SK-N-SH (cell line): ENCODE measurements at regions of chr20 and their contacts with region 1.

Region 1: DNA sequence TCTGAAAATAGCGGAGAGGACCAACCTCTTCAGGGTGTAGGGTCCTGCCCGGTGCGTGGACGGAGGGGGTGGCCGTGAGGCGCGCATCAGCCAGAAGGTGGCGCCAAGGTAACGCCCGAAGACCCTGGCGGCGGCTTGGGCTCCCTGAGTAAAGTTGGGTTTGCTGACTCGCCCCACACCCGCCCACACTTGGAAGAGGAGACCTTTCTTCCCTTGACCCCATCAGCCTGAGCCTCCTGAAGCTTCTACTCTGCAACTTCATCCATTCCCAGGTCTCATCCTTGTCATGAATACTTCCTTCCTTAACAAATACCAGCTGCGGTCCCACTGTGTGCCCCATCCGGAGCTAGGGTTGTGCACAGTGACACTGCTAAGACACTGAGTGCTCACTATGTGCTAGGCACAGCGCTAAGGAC is 14.6 kb downstream of the CD40 start:
- DNase-seq: peak; percentile 88
- H3K4me3 ChIP-seq: peak overlapping the region in 1 of 2 experiments; percentile 33; a peak in 1 of 4 replicates
- H3K27ac ChIP-seq: no peak overlapping the region
- H3K4me1 ChIP-seq: peaks cover 0 to 35% of the 10 kb centered on the region in 2 experiments; a peak in 1 of 4 replicates
- H3K27me3 ChIP-seq: peaks cover 30% of the 10 kb centered on the region; the same call in 1 of the 2 replicates
- CTCF ChIP-seq: peak; percentile 90
- EP300 ChIP-seq: no peak
- RAD21 ChIP-seq: peak; percentile 94

Region 2: DNA sequence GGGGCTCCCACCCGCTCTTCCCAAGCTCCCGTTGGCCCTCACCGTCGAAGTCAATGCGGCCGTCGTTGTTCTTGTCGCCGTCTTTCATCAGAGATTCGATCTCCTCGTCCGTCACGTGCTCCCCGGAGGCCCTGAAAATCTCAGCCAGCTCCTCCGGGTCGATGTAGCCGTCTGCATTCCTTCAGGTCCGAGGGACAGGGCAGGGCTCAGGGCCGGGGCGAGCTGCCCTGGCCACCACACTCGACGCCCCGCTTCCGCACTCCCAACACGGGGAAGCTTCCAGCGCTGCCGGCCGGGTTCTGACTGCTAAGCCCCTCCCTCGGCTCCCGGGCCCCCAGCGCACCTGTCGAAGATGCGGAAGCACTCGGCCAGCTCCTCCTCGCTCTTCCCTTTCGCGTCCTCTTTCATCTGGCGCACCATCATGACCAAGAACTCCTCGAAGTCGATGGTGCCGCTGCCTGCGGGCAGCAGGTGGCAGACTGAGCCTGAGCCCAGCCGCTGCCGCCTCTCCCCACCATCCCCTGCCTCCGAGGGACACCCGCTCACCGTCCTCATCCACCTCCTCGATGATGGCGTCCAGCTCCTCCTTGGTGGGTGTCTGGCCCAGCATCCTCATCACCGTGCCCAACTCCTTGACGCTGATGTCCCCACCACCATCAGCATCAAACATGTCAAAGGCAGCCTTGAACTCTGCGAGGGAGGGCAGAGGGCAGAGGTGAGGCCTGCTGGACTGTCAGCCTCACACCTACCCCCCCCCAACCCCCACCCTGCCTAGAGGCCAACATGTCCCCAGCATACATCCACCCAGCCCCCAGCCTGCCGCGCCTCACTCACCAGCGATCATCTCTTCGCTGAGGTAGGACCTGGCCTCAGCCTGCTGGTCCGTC is 308.5 kb before region 1 on chr20:
- CTCF ChIA-PET with region 1: no interaction called
- POLR2A ChIA-PET with region 1: no interaction called
- DNase-seq: peak; percentile 62
- H3K4me3 ChIP-seq: no peak overlapping the region
- H3K27ac ChIP-seq: no peak overlapping the region
- H3K4me1 ChIP-seq: peaks cover 0 to 8% of the 10 kb centered on the region in 2 experiments; a peak in 2 of 4 replicates
- H3K27me3 ChIP-seq: no peaks in the 10 kb centered on the region
- CTCF ChIP-seq: no peak; the same call in 1 of the 2 replicates
- EP300 ChIP-seq: no peak
- RAD21 ChIP-seq: peak; percentile 52

Region 3: DNA sequence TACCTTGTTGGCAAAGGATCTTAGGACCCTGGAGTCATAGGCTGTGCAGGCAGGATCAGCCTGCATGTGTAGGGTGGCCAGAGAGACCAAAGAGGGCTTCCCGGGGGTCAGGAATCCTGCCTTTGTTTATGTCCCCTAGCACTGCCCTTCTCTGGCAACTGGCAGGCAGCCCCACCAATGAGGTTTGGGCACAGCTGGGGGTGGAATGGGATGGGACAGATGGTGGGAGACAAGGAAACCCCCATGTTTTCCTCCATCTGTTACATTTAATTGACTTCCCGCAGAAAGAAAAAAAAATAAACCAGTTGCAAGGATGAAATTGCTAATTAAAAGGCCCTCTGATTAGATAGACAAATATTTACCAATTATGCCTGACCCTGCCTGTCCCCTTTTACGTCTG is 13.0 kb after region 1 on chr20:
- CTCF ChIA-PET with region 1: interaction called, 44 read pairs
- POLR2A ChIA-PET with region 1: no interaction called
- DNase-seq: no peak
- H3K4me3 ChIP-seq: no peak overlapping the region
- H3K27ac ChIP-seq: no peak overlapping the region
- H3K4me1 ChIP-seq: peaks cover 0 to 65% of the 10 kb centered on the region in 2 experiments; a peak in 2 of 4 replicates
- H3K27me3 ChIP-seq: peaks cover 17% of the 10 kb centered on the region; the same call in 1 of the 2 replicates
- CTCF ChIP-seq: no peak
- EP300 ChIP-seq: no peak
- RAD21 ChIP-seq: no peak

Region 4: GRCh38 chr20:46199198-46199597 is 66.5 kb after region 1 on chr20:
- CTCF ChIA-PET with region 1: interaction called, 10 read pairs
- POLR2A ChIA-PET with region 1: no interaction called
- DNase-seq: no peak
- H3K4me3 ChIP-seq: no peak overlapping the region
- H3K27ac ChIP-seq: no peak overlapping the region
- H3K4me1 ChIP-seq: peaks cover 0 to 25% of the 10 kb centered on the region in 2 experiments; a peak in 1 of 4 replicates
- H3K27me3 ChIP-seq: no peaks in the 10 kb centered on the region
- CTCF ChIP-seq: no peak
- EP300 ChIP-seq: no peak
- RAD21 ChIP-seq: no peak

Region 5: DNA sequence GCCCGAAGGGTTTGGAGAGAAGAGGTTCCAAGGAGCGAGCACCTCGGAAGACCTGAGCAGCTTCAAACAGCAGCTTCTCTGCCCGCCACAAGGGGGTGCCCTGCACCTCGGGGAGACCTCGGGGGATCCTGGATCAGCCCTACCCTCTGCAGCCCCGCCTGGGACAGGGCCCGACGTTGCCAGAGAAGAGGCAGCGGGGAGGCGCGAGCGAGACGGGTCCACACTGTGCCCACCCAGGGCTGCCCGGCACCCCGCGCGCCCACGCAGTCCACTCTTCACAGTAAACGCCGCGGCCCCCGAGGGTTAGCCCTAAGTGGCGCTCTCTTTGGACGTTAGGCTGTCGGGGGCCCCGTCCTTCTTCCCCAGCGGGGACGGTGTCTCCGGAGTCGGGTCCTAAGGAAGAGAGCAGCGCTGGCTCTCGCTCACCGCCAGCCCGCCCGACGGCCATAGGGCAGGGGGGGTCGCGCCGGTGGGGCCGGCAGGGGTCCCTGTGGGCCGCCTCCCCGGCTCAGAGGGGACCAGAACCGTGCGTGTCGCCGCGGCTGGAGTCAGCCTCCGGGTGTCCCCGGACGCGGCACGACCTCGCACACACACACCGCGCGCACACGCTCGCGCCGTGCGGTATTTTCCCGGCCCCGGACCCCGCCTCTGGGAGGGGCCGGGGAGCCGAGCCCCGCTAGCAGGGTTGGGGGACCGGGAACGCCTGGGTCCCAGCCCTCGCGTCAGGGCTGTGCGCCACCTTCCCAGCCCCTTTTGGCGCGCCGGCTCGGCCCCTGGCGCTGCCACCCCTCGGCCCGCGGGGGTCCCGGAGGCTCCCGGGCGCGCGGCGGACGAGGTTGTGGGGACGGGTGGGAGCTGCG is 174.7 kb after region 1 on chr20:
- CTCF ChIA-PET with region 1: interaction called, 140 read pairs
- POLR2A ChIA-PET with region 1: no interaction called
- DNase-seq: peak; percentile 89
- H3K4me3 ChIP-seq: peak overlapping the region in 1 of 2 experiments; percentile 49; a peak in 3 of 4 replicates
- H3K27ac ChIP-seq: no peak overlapping the region
- H3K4me1 ChIP-seq: no peaks in the 10 kb centered on the region; a peak in 1 of 4 replicates
- H3K27me3 ChIP-seq: peaks cover 61% of the 10 kb centered on the region
- CTCF ChIP-seq: peak; percentile 69
- EP300 ChIP-seq: no peak
- RAD21 ChIP-seq: peak; percentile 75

Region 6: DNA sequence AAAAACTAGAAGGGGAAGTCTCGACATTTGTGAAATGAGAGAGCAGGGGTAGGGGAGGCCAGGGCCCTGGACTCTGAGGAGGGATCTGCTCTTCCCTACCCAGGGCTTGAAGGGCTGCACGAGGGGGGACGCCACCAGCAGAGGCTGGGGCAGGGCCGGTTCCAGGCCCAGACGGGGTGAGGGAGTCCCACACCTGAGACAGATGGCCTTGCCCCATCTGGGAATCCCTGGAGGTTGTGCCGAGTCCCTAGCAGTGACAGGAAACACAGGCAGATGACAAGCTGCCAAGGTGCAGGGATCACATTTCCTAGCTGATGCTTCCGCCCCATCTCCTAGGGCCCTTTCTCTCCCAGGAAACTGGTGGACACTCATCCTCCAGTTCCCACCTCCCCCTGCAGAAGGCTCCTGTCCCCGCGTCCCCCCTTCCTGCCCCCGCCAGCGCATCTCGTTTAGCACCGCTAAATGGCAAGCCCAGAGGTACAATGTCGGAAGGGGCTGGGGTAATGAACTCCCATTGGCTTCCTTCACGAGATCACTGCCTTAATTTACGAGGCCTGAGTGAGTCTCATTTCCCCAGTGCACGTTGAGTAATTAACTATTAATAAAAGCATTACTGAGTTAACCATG is 210.7 kb after region 1 on chr20:
- CTCF ChIA-PET with region 1: interaction called, 219 read pairs
- POLR2A ChIA-PET with region 1: interaction called, 3 read pairs
- DNase-seq: no peak
- H3K4me3 ChIP-seq: no peak overlapping the region
- H3K27ac ChIP-seq: no peak overlapping the region
- H3K4me1 ChIP-seq: peaks cover 0 to 37% of the 10 kb centered on the region in 2 experiments; a peak in 1 of 4 replicates
- H3K27me3 ChIP-seq: no peaks in the 10 kb centered on the region
- CTCF ChIP-seq: no peak
- EP300 ChIP-seq: no peak
- RAD21 ChIP-seq: no peak

Region 7: GRCh38 chr20:46399401-46399800 is 266.7 kb after region 1 on chr20:
- CTCF ChIA-PET with region 1: interaction called, 13 read pairs
- POLR2A ChIA-PET with region 1: no interaction called
- DNase-seq: no peak
- H3K4me3 ChIP-seq: no peak overlapping the region
- H3K27ac ChIP-seq: no peak overlapping the region
- H3K4me1 ChIP-seq: peaks cover 0 to 13% of the 10 kb centered on the region in 2 experiments
- H3K27me3 ChIP-seq: no peaks in the 10 kb centered on the region
- CTCF ChIP-seq: no peak
- EP300 ChIP-seq: no peak
- RAD21 ChIP-seq: no peak